MCF 10A (cell line): ENCODE measurements at regions of chr16 and their contacts with region 1.

Region 1: GRCh38 chr16:69286941-69287713 is 24.0 kb upstream of the VPS4A start:
- DNase-seq: peak; percentile 77
- H3K4me3 Mint-ChIP-seq: no peak overlapping the region
- H3K27ac Mint-ChIP-seq: no peak overlapping the region
- H3K4me1 Mint-ChIP-seq: no peaks in the 10 kb centered on the region
- H3K27me3 Mint-ChIP-seq: no peaks in the 10 kb centered on the region
- CTCF ChIP-seq: peak; percentile 53

Region 2: DNA sequence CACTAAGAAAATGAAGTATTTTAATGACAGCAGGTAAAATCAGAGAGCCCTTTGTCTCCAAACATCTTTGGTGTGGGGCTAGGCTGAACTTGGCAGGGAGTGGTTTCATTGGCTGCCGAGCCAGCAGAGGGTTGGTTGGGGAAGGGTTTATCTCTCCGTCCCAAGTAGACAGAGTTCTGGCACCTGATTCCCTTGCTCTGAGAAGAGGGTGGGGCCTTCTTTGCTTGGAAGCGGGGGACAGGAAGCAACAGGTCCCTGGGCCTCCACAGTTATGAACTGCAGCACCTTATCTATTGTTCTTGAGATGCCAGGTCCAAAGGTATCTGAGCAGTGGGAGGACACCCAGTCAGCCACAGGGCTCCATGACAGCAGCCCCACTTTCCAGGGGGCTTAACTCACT is 562.3 kb before region 1 on chr16:
- CTCF ChIA-PET with region 1: no interaction called
- POLR2A ChIA-PET with region 1: no interaction called
- intact Hi-C with region 1: no loop called
- DNase-seq: no peak
- H3K4me3 Mint-ChIP-seq: no peak overlapping the region
- H3K27ac Mint-ChIP-seq: no peak overlapping the region
- H3K4me1 Mint-ChIP-seq: no peaks in the 10 kb centered on the region
- H3K27me3 Mint-ChIP-seq: no peaks in the 10 kb centered on the region
- CTCF ChIP-seq: no peak

Region 3: GRCh38 chr16:69150146-69150865 is 136.8 kb before region 1 on chr16:
- CTCF ChIA-PET with region 1: interaction called, 54 read pairs
- POLR2A ChIA-PET with region 1: interaction called, 7 read pairs
- intact Hi-C with region 1: loop called (anchors 1 kb)
- DNase-seq: peak; percentile 82
- H3K4me3 Mint-ChIP-seq: no peak overlapping the region
- H3K27ac Mint-ChIP-seq: no peak overlapping the region
- H3K4me1 Mint-ChIP-seq: no peaks in the 10 kb centered on the region
- H3K27me3 Mint-ChIP-seq: no peaks in the 10 kb centered on the region
- CTCF ChIP-seq: peak; percentile 77

Region 4: GRCh38 chr16:69171325-69172084 is 115.6 kb before region 1 on chr16:
- CTCF ChIA-PET with region 1: interaction called, 6 read pairs
- POLR2A ChIA-PET with region 1: interaction called, 8 read pairs
- intact Hi-C with region 1: loop called (anchors 2 kb)
- DNase-seq: no peak
- H3K4me3 Mint-ChIP-seq: no peak overlapping the region
- H3K27ac Mint-ChIP-seq: no peak overlapping the region
- H3K4me1 Mint-ChIP-seq: peaks cover 11% of the 10 kb centered on the region
- H3K27me3 Mint-ChIP-seq: no peaks in the 10 kb centered on the region
- CTCF ChIP-seq: no peak

Region 5: DNA sequence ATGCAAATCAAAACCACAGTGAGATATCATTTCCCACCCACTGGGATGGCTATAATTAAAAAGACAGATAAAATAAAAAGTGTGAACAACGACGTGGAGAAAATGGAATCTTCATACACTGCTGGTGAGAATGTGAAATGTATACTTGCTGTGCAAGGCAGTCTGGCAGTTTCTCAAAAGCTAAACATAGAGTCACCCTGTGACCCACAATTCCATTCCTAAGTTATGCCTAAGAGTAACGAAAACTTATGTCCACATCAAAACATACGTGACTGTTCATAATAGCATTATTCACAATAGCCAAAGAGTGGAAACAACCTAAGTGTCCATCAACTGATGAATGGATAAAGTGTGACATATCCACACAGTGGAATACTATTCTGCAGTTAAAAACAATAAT is 14.1 kb before region 1 on chr16:
- CTCF ChIA-PET with region 1: interaction called, 12 read pairs
- POLR2A ChIA-PET with region 1: interaction called, 3 read pairs
- intact Hi-C with region 1: no loop called
- DNase-seq: no peak
- H3K4me3 Mint-ChIP-seq: no peak overlapping the region
- H3K27ac Mint-ChIP-seq: no peak overlapping the region
- H3K4me1 Mint-ChIP-seq: no peaks in the 10 kb centered on the region
- H3K27me3 Mint-ChIP-seq: no peaks in the 10 kb centered on the region
- CTCF ChIP-seq: no peak

Region 6: GRCh38 chr16:69301861-69302260 is 14.7 kb after region 1 on chr16:
- CTCF ChIA-PET with region 1: interaction called, 12 read pairs
- POLR2A ChIA-PET with region 1: interaction called, 3 read pairs
- intact Hi-C with region 1: no loop called
- DNase-seq: no peak
- H3K4me3 Mint-ChIP-seq: no peak overlapping the region
- H3K27ac Mint-ChIP-seq: no peak overlapping the region
- H3K4me1 Mint-ChIP-seq: no peaks in the 10 kb centered on the region
- H3K27me3 Mint-ChIP-seq: no peaks in the 10 kb centered on the region
- CTCF ChIP-seq: no peak